Activated B cell treated with CpG ODN at 0.5 μM for 24 hours (primary cell): ENCODE measurements at regions of chr7 and their contacts with region 1.

Region 1: GRCh38 chr7:106644999-106645398 is 16.0 kb downstream of the CCDC71L start:
- DNase-seq: no peak
- ATAC-seq: peak; percentile 42
- H3K4me3 Mint-ChIP-seq: no peak overlapping the region
- H3K27ac Mint-ChIP-seq: no peak overlapping the region
- H3K4me1 Mint-ChIP-seq: peaks cover 11% of the 10 kb centered on the region
- H3K27me3 Mint-ChIP-seq: no peaks in the 10 kb centered on the region
- CTCF ChIP-seq: no peak

Region 2: GRCh38 chr7:106604303-106604923 is 40.6 kb before region 1 on chr7:
- CTCF ChIA-PET with region 1: no interaction called
- POLR2A ChIA-PET with region 1: no interaction called
- intact Hi-C with region 1: loop called (anchors 5 kb)
- DNase-seq: no peak
- ATAC-seq: no peak
- H3K4me3 Mint-ChIP-seq: no peak overlapping the region
- H3K27ac Mint-ChIP-seq: no peak overlapping the region
- H3K4me1 Mint-ChIP-seq: no peaks in the 10 kb centered on the region
- H3K27me3 Mint-ChIP-seq: peaks cover 3% of the 10 kb centered on the region
- CTCF ChIP-seq: no peak